ENCODE measurements at regions of chr11 and their contacts with region 1.

Region 1: GRCh38 chr11:68447015-68447801 is 13.3 kb upstream of the PPP6R3 start:
- DNase-seq: peak; percentile 72 to 86 (median 79)
- H3K4me3 ChIP-seq: no peak overlapping the region
- H3K27ac ChIP-seq: no peak overlapping the region
- H3K4me1 ChIP-seq: no peaks in the 10 kb centered on the region
- H3K27me3 ChIP-seq: no peaks in the 10 kb centered on the region
- CTCF ChIP-seq: peak; percentile 80 to 96 (median 92)
- POLR2A ChIP-seq: no peak

Region 2: GRCh38 chr11:68263444-68264035 is 183.7 kb before region 1 on chr11:
- intact Hi-C with region 1: loop called in 1 of 2 experiments (anchors 5 kb)
- DNase-seq: peak in 1 of 7 donors; percentile 42
- H3K4me3 ChIP-seq: no peak overlapping the region
- H3K27ac ChIP-seq: no peak overlapping the region
- H3K4me1 ChIP-seq: peaks cover 0 to 4% of the 10 kb centered on the region in 2 donors
- H3K27me3 ChIP-seq: no peaks in the 10 kb centered on the region
- CTCF ChIP-seq: no peak
- POLR2A ChIP-seq: no peak

Region 3: GRCh38 chr11:68297812-68298658 is 149.2 kb before region 1 on chr11:
- intact Hi-C with region 1: loop called in 1 of 2 experiments (anchors 10 kb)
- DNase-seq: peak; percentile 66 to 85 (median 78)
- H3K4me3 ChIP-seq: peak overlapping the region in 1 of 4 donors; percentile 32
- H3K27ac ChIP-seq: peak overlapping the region in 1 of 5 donors; percentile 16
- H3K4me1 ChIP-seq: peaks cover 6 to 12% of the 10 kb centered on the region in 2 donors
- H3K27me3 ChIP-seq: no peaks in the 10 kb centered on the region
- CTCF ChIP-seq: peak; percentile 90 to 99 (median 96)
- POLR2A ChIP-seq: no peak

Measured in adrenal gland (tissue), 19 donors.